AG04450 (cell line): ENCODE measurements at regions of chr4 and their contacts with region 1.

Region 1: DNA sequence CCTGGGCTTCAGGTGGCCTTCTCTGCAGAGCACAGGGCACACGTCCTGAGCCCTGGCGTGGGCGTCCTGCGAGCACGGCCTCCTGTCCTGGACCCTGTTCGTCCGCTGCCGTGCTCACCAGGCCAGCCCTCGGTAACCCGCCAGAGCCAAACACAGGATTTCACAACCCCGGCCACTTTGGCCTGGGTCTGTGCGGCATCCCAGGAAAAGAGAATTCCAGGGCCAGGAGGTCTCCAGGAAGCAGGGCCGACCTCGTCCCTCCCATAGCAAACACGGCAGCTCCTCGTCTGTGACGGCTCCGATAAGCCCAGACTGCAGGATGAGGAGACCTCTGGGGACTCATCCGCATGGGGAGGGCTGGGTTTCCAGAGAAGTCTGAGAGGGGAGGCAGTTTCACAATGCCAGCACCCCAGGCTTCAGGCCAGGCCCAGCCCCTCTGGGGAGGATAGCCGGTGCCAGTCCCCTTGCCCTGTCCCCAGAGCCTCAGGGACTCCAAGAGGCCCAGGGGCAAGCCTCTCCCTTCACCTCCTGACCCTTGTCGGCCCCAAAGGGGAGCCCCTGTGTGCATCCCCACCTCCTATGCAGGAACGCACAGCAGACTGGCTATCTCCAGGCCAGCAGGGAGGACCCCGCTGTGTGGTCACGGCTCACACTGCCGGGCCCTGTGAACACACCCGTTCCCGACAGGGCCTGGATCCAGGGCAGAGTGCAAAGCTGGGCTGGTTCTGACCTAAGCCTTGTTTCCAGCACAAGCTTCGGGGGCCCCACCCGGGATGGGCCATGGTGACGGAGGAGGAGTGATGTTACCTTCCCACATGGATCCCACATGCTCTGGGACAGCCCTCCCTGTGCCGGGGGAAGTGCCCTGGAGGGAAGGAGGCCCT is 22.3 kb upstream of the HTRA3 start:
- DNase-seq: no peak
- H3K4me3 ChIP-seq: no peak overlapping the region
- H3K27ac ChIP-seq: no peak overlapping the region
- H3K27me3 ChIP-seq: peaks cover 7% of the 10 kb centered on the region
- CTCF ChIP-seq: no peak

Region 2: GRCh38 chr4:8260656-8261111 is 13.4 kb after region 1 on chr4:
- CTCF ChIA-PET with region 1: interaction called, 4 read pairs
- POLR2A ChIA-PET with region 1: interaction called, 10 read pairs
- DNase-seq: peak; percentile 83
- H3K4me3 ChIP-seq: no peak overlapping the region
- H3K27ac ChIP-seq: peak overlapping the region; percentile 65
- H3K27me3 ChIP-seq: no peaks in the 10 kb centered on the region
- CTCF ChIP-seq: peak; percentile 29; the same call in 1 of the 2 replicates